Ascending aorta (tissue), 2 donors: ENCODE measurements at regions of chrX and their contacts with region 1.

Region 1: GRCh38 chrX:23901805-23902204 is 5.9 kb downstream of the APOO start:
- DNase-seq: peak in 1 of 2 donors; percentile 72
- H3K4me3 ChIP-seq: peak overlapping the region; percentile 29 to 42
- H3K27ac ChIP-seq: peak overlapping the region; percentile 6 to 65
- H3K4me1 ChIP-seq: peaks cover 0 to 13% of the 10 kb centered on the region in 2 donors
- H3K27me3 ChIP-seq: no peaks in the 10 kb centered on the region
- CTCF ChIP-seq: peak; percentile 45 to 57 (median 55)

Region 2: GRCh38 chrX:23694606-23695005 is 207.2 kb before region 1 on chrX:
- intact Hi-C with region 1: loop called (anchors 1 kb)
- DNase-seq: no peak
- H3K4me3 ChIP-seq: no peak overlapping the region
- H3K27ac ChIP-seq: no peak overlapping the region
- H3K4me1 ChIP-seq: no peaks in the 10 kb centered on the region
- H3K27me3 ChIP-seq: no peaks in the 10 kb centered on the region
- CTCF ChIP-seq: peak in 2 of 3 experiments; percentile 45 to 62

Region 3: DNA sequence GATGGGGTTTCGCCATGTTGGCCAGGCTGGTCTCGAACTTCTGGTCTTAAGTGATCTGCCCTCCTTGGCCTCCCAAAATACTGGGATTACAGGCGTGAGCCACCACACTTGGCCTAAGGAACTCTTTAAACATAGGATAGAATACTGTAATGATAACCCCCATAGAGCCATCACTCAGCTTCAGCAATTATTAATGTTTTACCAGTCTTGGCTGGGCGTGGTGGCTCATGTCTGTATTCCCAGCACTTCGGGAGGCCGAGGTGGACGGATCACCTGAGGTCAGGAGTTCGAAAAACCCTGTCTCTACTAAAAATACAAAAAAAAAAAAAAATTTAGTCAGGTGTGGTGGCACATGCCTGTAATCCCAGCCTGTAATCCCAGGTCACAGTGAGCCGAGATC is 168.1 kb after region 1 on chrX:
- intact Hi-C with region 1: no loop called
- DNase-seq: no peak
- H3K4me3 ChIP-seq: no peak overlapping the region
- H3K27ac ChIP-seq: no peak overlapping the region
- H3K4me1 ChIP-seq: no peaks in the 10 kb centered on the region
- H3K27me3 ChIP-seq: no peaks in the 10 kb centered on the region
- CTCF ChIP-seq: no peak